ENCODE measurements at regions of chr6 and their contacts with region 1.

Region 1: DNA sequence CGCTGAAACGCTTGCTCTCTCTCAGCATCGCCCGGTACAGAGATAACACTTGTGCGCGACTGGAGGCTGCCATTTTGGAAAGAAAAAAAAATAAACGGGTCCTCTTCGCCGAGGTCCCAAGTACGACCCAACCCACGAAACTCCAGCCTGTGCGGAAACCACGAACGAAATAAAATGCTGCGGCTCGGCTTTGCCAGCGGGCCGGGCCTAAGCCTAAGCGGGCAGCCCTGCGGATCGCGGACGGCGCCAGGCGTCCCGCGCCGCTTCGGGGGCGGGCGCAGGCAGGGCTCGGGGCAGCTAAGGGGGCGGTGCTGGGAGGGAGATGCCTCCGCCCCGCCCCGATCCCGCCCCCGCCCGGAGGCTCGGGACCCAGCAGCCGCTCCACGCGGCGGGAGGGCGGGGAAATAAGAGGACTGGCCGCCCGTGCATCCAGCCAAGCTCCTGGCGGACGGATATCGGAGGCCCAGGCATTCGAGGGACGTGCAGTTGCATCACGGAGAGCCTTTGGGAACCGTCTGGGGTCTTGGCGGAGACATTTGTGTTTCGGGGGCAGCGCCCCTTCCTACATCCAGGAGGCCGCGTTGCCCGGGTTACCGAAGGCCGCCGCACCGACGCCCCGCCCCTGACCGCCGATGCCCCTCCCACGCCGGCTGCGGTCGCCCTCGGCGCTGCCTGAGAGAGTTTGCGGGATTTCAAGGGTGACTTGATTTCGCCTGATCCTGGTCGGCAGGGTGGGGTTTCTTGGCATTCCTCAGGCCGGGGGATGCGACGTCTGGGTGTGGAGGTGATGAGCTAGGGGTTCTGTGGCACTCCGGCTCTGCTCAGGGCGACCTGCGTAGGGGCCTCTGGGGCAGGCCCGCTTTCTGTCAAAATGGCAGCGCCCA is at the starts of genes FARS2 and LYRM4:
- DNase-seq: peak; percentile 91
- H3K4me3 Mint-ChIP-seq: peak within 1 kb of the TSS; percentile 99
- H3K27ac Mint-ChIP-seq: peak within 1 kb of the TSS; percentile 96
- H3K4me1 Mint-ChIP-seq: peaks cover 60% of the 10 kb centered on the region
- H3K27me3 Mint-ChIP-seq: no peaks in the 10 kb centered on the region
- total RNA-seq, gene FARS2: 17.6 to 18.7 TPM
- total RNA-seq, gene LYRM4: 21.2 to 22.7 TPM

Region 2: GRCh38 chr6:4973982-4974745 is 286.7 kb before region 1 on chr6:
- CTCF ChIA-PET with region 1: no interaction called
- POLR2A ChIA-PET with region 1: no interaction called
- DNase-seq: no peak
- H3K4me3 Mint-ChIP-seq: no peak overlapping the region
- H3K27ac Mint-ChIP-seq: no peak overlapping the region
- H3K4me1 Mint-ChIP-seq: no peaks in the 10 kb centered on the region
- H3K27me3 Mint-ChIP-seq: peaks cover 11% of the 10 kb centered on the region

Region 3: GRCh38 chr6:5174244-5174643 is 86.7 kb before region 1 on chr6:
- CTCF ChIA-PET with region 1: interaction called, 6 read pairs
- POLR2A ChIA-PET with region 1: interaction called, 28 read pairs
- DNase-seq: peak; percentile 79
- H3K4me3 Mint-ChIP-seq: peak overlapping the region; percentile 57
- H3K27ac Mint-ChIP-seq: peak overlapping the region; percentile 89
- H3K4me1 Mint-ChIP-seq: peaks cover 50% of the 10 kb centered on the region
- H3K27me3 Mint-ChIP-seq: no peaks in the 10 kb centered on the region

Region 4: GRCh38 chr6:5278047-5278446 is 17.1 kb after region 1 on chr6:
- CTCF ChIA-PET with region 1: interaction called, 4 read pairs
- POLR2A ChIA-PET with region 1: interaction called, 62 read pairs
- DNase-seq: no peak
- H3K4me3 Mint-ChIP-seq: no peak overlapping the region
- H3K27ac Mint-ChIP-seq: peak overlapping the region; percentile 63
- H3K4me1 Mint-ChIP-seq: peaks cover 84% of the 10 kb centered on the region
- H3K27me3 Mint-ChIP-seq: no peaks in the 10 kb centered on the region